Activated T-helper 2 cell treated with anti-CD3 and anti-CD28 coated beads, Interferon-gamma antibody, Interleukin-2, Interleukin-4, amounts not matched to agents 10 μg/mL and 5 μg/mL and 100 μg/mL, durations not matched to agents 14 hours and 24 hours and 36 hours (primary cell): ENCODE measurements at regions of chr11 and their contacts with region 1.

Region 1: GRCh38 chr11:102495161-102496042 is 35.1 kb downstream of the MMP7 start:
- DNase-seq: no peak
- H3K4me3 Mint-ChIP-seq: no peak overlapping the region
- H3K27ac Mint-ChIP-seq: no peak overlapping the region
- H3K4me1 Mint-ChIP-seq: peaks cover 16% of the 10 kb centered on the region
- H3K27me3 Mint-ChIP-seq: peaks cover 19% of the 10 kb centered on the region

Region 2: GRCh38 chr11:102341844-102342318 is 153.5 kb before region 1 on chr11:
- intact Hi-C with region 1: loop called (anchors 1 kb)
- DNase-seq: peak; percentile 56
- H3K4me3 Mint-ChIP-seq: no peak overlapping the region
- H3K27ac Mint-ChIP-seq: no peak overlapping the region
- H3K4me1 Mint-ChIP-seq: peaks cover 27% of the 10 kb centered on the region
- H3K27me3 Mint-ChIP-seq: no peaks in the 10 kb centered on the region

Region 3: GRCh38 chr11:102367364-102367763 is 128.0 kb before region 1 on chr11:
- intact Hi-C with region 1: loop called (anchors 1 kb)
- DNase-seq: no peak
- H3K4me3 Mint-ChIP-seq: no peak overlapping the region
- H3K27ac Mint-ChIP-seq: no peak overlapping the region
- H3K4me1 Mint-ChIP-seq: peaks cover 18% of the 10 kb centered on the region
- H3K27me3 Mint-ChIP-seq: no peaks in the 10 kb centered on the region

Region 4: DNA sequence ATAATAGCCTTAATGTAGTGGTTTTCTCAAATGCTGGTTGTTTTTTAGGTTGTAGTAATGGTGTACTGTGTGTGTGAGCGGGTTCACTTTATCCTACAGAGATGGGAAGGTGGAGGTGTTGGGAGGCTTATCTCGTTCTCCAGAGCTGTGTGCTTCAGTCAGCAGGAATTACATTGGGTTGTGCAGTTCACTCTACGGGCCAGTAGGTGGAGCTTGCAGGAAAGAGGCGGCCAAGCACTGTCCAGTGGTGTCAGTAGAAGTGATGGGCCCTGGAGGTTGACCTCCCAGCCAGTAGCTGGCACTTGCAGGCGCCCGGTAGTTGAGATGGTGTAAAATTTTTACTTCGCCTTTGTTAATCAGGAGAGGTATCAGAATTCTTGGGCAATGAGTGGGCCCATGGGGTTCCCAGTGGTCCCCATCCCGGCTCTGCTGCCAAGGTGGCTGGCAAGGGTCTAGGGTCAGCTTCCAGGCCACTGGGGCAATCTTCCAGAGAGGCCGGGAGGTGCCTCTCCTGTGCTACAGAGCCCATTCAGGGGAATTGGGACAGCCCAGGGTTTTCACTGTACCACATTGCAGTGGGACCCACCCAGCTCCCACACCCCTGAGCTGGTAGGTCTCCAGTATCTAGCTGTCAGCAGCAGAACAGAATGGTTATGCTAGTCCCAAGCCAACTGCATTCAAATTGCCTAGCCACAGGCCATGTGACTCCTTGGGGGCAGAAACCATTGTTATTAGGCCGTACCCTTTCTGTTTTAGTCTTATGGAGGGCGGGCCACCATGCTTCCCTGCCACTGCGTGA is 104.5 kb before region 1 on chr11:
- intact Hi-C with region 1: loop called (anchors 1 kb)
- DNase-seq: peak; percentile 46
- H3K4me3 Mint-ChIP-seq: no peak overlapping the region
- H3K27ac Mint-ChIP-seq: no peak overlapping the region
- H3K4me1 Mint-ChIP-seq: peaks cover 7% of the 10 kb centered on the region
- H3K27me3 Mint-ChIP-seq: no peaks in the 10 kb centered on the region

Region 5: GRCh38 chr11:102410382-102410784 is 85.0 kb before region 1 on chr11:
- intact Hi-C with region 1: no loop called
- DNase-seq: no peak
- H3K4me3 Mint-ChIP-seq: no peak overlapping the region
- H3K27ac Mint-ChIP-seq: no peak overlapping the region
- H3K4me1 Mint-ChIP-seq: peaks cover 49% of the 10 kb centered on the region
- H3K27me3 Mint-ChIP-seq: no peaks in the 10 kb centered on the region

Region 6: DNA sequence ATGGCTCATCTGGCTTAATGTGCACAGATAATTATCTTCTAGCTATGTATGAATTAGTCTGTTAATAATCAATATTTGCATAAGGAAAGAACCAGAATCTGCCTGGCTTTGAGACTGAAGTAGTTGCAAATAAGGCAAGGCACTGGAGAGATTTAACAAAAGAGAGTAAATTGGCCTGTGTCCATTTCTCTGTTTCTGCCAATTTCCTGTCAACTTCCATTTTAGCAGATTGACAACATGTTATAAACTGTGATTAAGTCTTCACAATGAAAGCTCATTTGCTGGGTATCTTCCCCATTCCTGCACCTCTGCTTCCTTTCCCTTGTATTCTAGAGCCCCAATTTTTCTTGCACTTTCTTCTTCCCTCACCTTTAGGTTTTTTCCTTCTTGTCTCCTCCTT is 37.5 kb before region 1 on chr11:
- intact Hi-C with region 1: loop called (anchors 1 kb)
- DNase-seq: no peak
- H3K4me3 Mint-ChIP-seq: no peak overlapping the region
- H3K27ac Mint-ChIP-seq: peak overlapping the region; percentile 18
- H3K4me1 Mint-ChIP-seq: peaks cover 67% of the 10 kb centered on the region
- H3K27me3 Mint-ChIP-seq: no peaks in the 10 kb centered on the region

Region 7: DNA sequence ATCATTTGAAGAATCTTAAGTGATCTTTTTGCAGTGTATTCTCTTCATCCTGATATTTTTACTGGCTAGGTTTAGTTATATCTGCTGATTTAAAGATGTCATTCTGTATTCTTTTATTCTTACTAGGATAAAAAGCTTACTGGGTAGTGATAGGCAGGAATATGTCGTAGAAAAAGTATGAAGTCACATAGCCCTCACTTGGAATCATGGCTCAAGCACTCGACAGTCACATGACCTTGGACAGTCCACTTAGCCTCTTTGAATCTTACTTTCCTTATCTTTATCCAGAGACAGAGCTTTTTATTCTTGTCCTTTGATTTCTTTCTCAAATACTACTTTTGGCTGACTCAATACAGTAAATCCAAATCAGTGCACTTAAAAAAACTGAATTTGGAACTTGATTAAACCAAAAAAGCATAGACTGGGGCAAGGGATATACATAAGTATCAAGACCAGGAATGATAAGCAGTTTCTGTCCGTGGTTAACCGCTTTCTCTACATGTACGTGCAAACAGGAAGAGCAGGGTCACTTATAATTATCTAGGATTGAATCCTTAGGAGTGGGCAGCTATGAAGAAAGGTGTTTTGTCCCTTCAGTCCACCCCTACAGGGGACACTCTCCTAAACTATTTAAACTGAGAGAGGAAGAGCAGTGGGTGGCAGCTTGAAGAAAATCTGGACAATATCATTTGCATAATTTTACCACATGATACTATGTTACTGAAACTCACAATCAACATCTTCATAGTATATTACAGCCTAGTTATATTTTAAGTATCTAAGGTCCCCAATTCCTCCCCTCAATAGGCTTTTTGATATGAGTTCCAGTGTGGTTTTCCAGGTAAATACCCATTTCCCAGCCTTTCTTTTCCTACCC is 27.1 kb after region 1 on chr11:
- intact Hi-C with region 1: no loop called
- DNase-seq: no peak
- H3K4me3 Mint-ChIP-seq: no peak overlapping the region
- H3K27ac Mint-ChIP-seq: no peak overlapping the region
- H3K4me1 Mint-ChIP-seq: peaks cover 11% of the 10 kb centered on the region
- H3K27me3 Mint-ChIP-seq: peaks cover 32% of the 10 kb centered on the region

Region 8: GRCh38 chr11:102614485-102614884 is 119.1 kb after region 1 on chr11:
- intact Hi-C with region 1: loop called (anchors 2 kb)
- DNase-seq: no peak
- H3K4me3 Mint-ChIP-seq: no peak overlapping the region
- H3K27ac Mint-ChIP-seq: no peak overlapping the region
- H3K4me1 Mint-ChIP-seq: peaks cover 18% of the 10 kb centered on the region
- H3K27me3 Mint-ChIP-seq: no peaks in the 10 kb centered on the region